ENCODE measurements at regions of chr18 and their contacts with region 1.

Region 1: DNA sequence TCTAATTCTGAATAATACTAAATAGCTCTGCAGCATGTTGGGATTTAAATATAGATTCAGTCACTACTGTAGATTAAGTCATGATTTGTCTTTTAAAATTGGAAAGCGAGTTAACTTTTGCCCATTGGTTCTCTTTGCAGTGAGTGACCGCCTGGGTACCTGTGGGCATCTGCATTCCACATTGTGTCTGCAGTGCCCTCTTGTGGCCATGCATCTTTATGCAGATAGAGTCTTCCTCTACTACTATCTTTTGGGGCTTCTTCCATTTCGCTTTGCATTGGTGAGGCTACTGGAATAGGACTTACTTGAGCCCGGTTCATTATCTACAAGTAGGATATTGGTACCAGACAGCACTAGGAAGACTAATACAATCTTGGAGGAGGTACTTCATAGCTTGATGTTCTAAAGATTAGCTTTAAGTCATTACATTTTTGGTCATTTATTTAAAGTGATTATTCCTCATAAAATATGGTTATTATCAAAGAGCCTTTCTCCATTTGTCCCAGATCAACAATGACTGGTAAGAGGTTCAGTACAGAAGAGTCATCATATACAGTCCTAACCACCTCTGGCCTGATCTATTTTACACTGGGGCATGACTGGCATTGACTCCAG is 203.0 kb downstream of the SOCS6 start:
- DNase-seq: no peak
- ATAC-seq: peak; percentile 96
- H3K4me3 ChIP-seq: no peak overlapping the region
- H3K27ac ChIP-seq: no peak overlapping the region
- H3K4me1 ChIP-seq: no peaks in the 10 kb centered on the region
- H3K27me3 ChIP-seq: no peaks in the 10 kb centered on the region
- CTCF ChIP-seq: peak; percentile 68 to 83 (median 80)
- EP300 ChIP-seq: no peak
- POLR2A ChIP-seq: no peak
- RAD21 ChIP-seq: peak; percentile 41; the same call in 1 of the 2 replicates

Region 2: GRCh38 chr18:70355620-70356385 is 136.0 kb before region 1 on chr18:
- CTCF ChIA-PET with region 1: no interaction called
- POLR2A ChIA-PET with region 1: no interaction called
- RAD21 ChIA-PET with region 1: no interaction called
- SMC1A ChIA-PET with region 1: no interaction called
- in situ Hi-C with region 1: no loop called
- intact Hi-C with region 1: no loop called
- DNase-seq: no peak
- ATAC-seq: no peak
- H3K4me3 ChIP-seq: no peak overlapping the region
- H3K27ac ChIP-seq: no peak overlapping the region
- H3K4me1 ChIP-seq: peaks cover 6% of the 10 kb centered on the region; the same call in 1 of the 2 replicates
- H3K27me3 ChIP-seq: no peaks in the 10 kb centered on the region
- CTCF ChIP-seq: no peak
- EP300 ChIP-seq: no peak
- POLR2A ChIP-seq: no peak
- RAD21 ChIP-seq: no peak

Region 3: GRCh38 chr18:70373042-70373519 is 118.8 kb before region 1 on chr18:
- CTCF ChIA-PET with region 1: no interaction called
- POLR2A ChIA-PET with region 1: no interaction called
- RAD21 ChIA-PET with region 1: no interaction called
- SMC1A ChIA-PET with region 1: no interaction called
- in situ Hi-C with region 1: no loop called
- intact Hi-C with region 1: no loop called
- DNase-seq: no peak
- ATAC-seq: no peak
- H3K4me3 ChIP-seq: no peak overlapping the region
- H3K27ac ChIP-seq: no peak overlapping the region
- H3K4me1 ChIP-seq: no peaks in the 10 kb centered on the region
- H3K27me3 ChIP-seq: no peaks in the 10 kb centered on the region
- CTCF ChIP-seq: no peak
- EP300 ChIP-seq: no peak
- POLR2A ChIP-seq: no peak
- RAD21 ChIP-seq: no peak

Region 4: DNA sequence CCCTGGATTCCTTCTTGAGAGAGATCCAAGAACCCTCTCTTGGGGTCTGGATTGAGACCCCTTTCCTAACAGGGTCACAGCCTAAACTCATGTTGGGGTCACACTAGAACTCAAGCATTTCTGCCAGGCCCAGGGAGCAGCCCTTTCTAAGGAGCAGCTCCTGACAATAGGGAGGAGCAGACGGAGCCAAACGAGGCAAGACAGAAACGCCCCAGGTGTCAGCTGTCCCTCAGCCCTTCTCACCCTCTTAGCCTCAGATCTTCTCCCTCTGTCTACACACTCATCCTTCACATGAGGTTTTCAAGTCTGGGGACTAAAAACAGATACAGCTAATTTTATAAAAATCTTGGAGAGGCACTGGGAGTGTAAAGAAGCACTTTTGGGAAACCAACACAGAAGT is 45.8 kb before region 1 on chr18:
- CTCF ChIA-PET with region 1: no interaction called
- POLR2A ChIA-PET with region 1: no interaction called
- RAD21 ChIA-PET with region 1: no interaction called
- SMC1A ChIA-PET with region 1: no interaction called
- in situ Hi-C with region 1: no loop called
- intact Hi-C with region 1: no loop called
- DNase-seq: no peak
- ATAC-seq: no peak
- H3K4me3 ChIP-seq: no peak overlapping the region
- H3K27ac ChIP-seq: no peak overlapping the region
- H3K4me1 ChIP-seq: no peaks in the 10 kb centered on the region
- H3K27me3 ChIP-seq: no peaks in the 10 kb centered on the region; a peak in 2 of 4 replicates
- CTCF ChIP-seq: no peak
- EP300 ChIP-seq: no peak
- POLR2A ChIP-seq: no peak
- RAD21 ChIP-seq: no peak

Region 5: DNA sequence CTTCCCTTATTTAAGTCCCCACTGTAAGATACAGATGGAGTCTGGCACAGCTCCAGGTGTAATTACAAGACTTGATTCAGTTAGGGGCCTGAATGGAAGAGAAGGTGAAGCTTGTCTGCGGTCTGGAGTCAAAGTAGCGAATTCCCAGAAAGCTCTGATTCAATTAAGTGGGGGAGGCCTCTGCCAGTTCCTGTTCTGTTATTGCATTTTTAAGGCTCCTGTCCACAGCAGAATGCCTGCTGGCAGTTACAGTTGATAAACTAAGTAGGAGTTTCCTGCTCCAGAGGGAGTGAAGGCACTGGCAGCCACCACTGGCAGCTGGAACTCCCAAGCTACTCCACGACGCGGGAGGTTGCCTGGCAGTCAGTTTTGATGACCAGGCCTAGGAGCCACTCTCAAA is 21.9 kb before region 1 on chr18:
- CTCF ChIA-PET with region 1: interaction called, 14 read pairs
- POLR2A ChIA-PET with region 1: no interaction called
- RAD21 ChIA-PET with region 1: no interaction called
- SMC1A ChIA-PET with region 1: no interaction called
- in situ Hi-C with region 1: no loop called
- intact Hi-C with region 1: no loop called
- DNase-seq: no peak
- ATAC-seq: no peak
- H3K4me3 ChIP-seq: no peak overlapping the region
- H3K27ac ChIP-seq: no peak overlapping the region
- H3K4me1 ChIP-seq: no peaks in the 10 kb centered on the region
- H3K27me3 ChIP-seq: no peaks in the 10 kb centered on the region; a peak in 1 of 4 replicates
- CTCF ChIP-seq: no peak
- EP300 ChIP-seq: no peak
- POLR2A ChIP-seq: no peak
- RAD21 ChIP-seq: no peak

Region 6: DNA sequence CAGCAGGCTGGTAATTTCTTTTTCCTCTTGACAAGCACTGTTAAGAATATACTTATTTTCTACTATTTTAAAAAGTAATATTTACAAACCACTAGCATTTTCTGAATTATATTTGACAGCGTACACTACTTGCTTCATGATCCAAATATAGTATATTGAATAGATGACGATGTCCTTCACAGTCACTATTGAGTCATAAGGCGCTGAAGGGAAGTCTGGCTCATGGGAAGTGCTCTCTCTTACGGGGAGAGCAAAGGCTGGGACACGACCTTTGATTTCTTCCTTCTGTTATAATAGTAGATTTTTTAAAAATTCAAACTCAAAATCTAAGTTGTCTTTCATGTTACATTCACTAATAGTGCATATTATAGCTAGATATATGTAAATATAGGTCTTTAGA is 154.1 kb after region 1 on chr18:
- CTCF ChIA-PET with region 1: no interaction called
- POLR2A ChIA-PET with region 1: no interaction called
- RAD21 ChIA-PET with region 1: no interaction called
- SMC1A ChIA-PET with region 1: no interaction called
- in situ Hi-C with region 1: no loop called
- intact Hi-C with region 1: no loop called
- DNase-seq: no peak
- ATAC-seq: no peak
- H3K4me3 ChIP-seq: no peak overlapping the region
- H3K27ac ChIP-seq: no peak overlapping the region
- H3K4me1 ChIP-seq: no peaks in the 10 kb centered on the region
- H3K27me3 ChIP-seq: no peaks in the 10 kb centered on the region
- CTCF ChIP-seq: no peak
- EP300 ChIP-seq: no peak
- POLR2A ChIP-seq: no peak
- RAD21 ChIP-seq: no peak

Measured in GM12878 (cell line).